ENCODE measurements at regions of chr20 and their contacts with region 1.

Region 1: GRCh38 chr20:47379433-47380150 is 23.1 kb upstream of the ZMYND8 start:
- DNase-seq: peak in 1 of 3 donors; percentile 27
- ATAC-seq: no peak
- H3K4me3 ChIP-seq: no peak overlapping the region
- H3K27ac ChIP-seq: no peak overlapping the region
- H3K4me1 ChIP-seq: peaks cover 4% of the 10 kb centered on the region
- H3K27me3 ChIP-seq: no peaks in the 10 kb centered on the region

Region 2: DNA sequence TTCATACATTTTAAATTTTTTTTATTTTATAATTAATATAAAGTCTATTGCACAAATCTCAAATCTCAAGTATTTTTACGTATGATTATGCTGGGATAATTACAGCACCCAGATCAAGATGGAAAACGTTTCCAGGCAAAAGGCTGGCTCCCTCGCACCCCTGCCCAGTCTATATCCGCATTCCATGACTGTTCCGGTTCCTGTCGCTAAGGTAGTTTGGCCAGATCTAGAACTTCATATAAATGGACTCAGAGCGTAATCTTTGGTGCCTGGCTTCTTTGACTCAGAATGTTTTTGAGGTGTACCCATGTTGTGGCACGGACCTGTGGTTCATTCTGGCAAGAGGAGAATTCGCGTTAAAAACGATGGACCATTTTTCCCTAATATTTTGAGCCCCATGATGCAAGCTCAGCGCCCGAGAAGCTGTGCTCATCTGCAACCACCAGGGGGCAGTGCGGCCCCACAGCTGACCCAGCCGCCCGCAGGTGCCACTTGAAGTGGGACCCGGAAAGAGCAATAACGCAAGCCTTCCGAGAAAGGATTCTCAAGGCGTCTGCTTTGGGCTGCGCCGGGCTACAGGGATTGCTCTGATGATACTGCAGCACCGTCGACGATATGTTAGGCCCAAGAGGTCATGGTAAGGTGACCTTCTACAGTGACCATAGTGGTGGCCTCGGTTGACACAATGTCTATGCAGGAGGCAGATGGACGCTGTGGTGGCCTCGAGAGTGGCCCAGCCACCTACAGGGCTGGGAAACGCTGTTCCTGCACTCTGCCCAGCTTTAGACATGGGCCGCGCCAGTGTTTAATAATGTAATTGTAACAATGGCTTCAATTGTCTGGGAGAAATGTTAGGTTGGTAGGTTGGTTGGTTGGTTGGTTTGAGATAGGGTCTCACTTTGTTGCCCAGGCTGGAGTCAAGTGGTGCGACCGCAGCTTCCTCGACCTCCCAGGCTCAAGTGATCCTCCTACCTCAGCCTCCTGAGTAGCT is 183.2 kb before region 1 on chr20:
- intact Hi-C with region 1: loop called (anchors 5 kb)
- DNase-seq: peak; percentile 72 to 88 (median 86)
- ATAC-seq: peak; percentile 71 to 76
- H3K4me3 ChIP-seq: no peak overlapping the region
- H3K27ac ChIP-seq: no peak overlapping the region
- H3K4me1 ChIP-seq: peaks cover 3% of the 10 kb centered on the region
- H3K27me3 ChIP-seq: no peaks in the 10 kb centered on the region

Region 3: DNA sequence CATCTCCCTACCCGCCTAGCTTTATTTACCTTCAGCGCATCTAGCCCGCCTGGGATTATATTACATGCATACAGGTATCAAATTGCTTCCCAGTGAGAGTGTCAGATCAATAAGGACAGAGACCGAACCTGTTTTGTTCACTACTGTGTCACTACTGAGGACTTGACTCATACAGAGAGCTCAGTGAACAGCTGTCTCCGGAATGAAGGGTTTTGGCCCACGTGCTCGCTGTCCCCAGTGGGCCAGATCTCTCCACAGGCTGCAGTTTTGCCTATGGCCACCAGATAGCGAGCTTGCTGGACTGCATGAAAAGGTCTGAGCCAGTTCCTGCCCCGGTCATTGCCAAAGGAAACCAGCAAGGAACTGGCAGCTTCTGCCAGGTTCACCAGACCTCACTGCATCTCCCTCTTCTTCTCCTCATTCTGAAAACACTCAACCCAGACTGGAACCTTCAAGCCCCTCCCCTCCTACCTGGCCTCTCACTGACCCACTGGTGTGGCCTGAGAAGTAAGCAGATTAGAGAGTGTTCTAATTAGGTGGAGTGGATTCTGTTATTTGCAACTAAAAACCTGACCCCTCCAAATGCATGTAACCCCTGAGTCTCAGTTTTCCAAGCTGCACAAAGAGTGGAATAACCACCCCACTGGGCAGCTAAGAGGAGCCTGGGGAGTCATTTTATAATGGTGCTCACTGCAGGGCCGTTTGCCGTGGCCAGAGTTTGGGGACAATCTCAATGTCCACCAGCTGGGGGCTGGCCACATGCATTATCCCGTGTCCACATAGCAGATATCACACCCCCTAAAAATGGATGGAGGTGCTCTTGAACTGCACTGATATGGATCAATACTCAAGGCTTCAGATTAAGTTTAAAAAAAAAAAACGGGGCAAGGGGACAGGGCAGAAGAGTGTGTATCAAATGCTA is 173.8 kb before region 1 on chr20:
- intact Hi-C with region 1: loop called in 2 of 4 experiments (anchors 5 kb)
- DNase-seq: peak; percentile 71 to 92 (median 89)
- ATAC-seq: peak; percentile 75
- H3K4me3 ChIP-seq: no peak overlapping the region
- H3K27ac ChIP-seq: no peak overlapping the region
- H3K4me1 ChIP-seq: peaks cover 3% of the 10 kb centered on the region
- H3K27me3 ChIP-seq: no peaks in the 10 kb centered on the region

Region 4: DNA sequence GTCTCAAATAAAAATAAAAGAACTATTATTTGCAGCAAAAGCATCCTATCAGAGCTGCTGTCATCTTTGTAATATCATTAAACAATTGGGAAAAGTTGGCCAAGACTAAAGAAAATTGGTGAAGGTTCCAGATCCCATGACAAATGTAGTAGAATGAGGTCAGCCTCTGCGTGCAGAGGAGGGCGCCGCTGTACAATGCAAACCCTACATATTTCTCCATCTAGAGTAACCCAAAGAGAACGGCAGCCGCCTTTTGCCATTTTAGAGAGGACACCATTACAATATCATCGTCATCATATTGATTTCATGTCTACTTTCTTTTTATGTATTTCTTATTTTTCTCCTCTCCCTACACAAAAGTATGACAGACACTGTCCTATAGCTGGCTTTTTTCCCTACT is 82.6 kb before region 1 on chr20:
- intact Hi-C with region 1: loop called in 2 of 4 experiments (anchors 5 to 10 kb)
- DNase-seq: no peak
- ATAC-seq: no peak
- H3K4me3 ChIP-seq: no peak overlapping the region
- H3K27ac ChIP-seq: no peak overlapping the region
- H3K4me1 ChIP-seq: peaks cover 5% of the 10 kb centered on the region
- H3K27me3 ChIP-seq: no peaks in the 10 kb centered on the region

Region 5: GRCh38 chr20:47330933-47331864 is 48.4 kb before region 1 on chr20:
- intact Hi-C with region 1: no loop called
- DNase-seq: no peak
- ATAC-seq: peak in 1 of 2 donors; percentile 63
- H3K4me3 ChIP-seq: no peak overlapping the region
- H3K27ac ChIP-seq: peak overlapping the region; percentile 47
- H3K4me1 ChIP-seq: peaks cover 30% of the 10 kb centered on the region
- H3K27me3 ChIP-seq: no peaks in the 10 kb centered on the region